Dendritic cell treated with granulocyte-macrophage colony-stimulating factor and Interleukin-4, amounts not matched to agents 40 ng/mL and 50 ng/mL, for 4 days (primary cell): ENCODE measurements at regions of chr5 and their contacts with region 1.

Region 1: GRCh38 chr5:42994246-42995151 is 45.6 kb downstream of the ANXA2R start:
- H3K4me3 Mint-ChIP-seq: peak overlapping the region; percentile 100
- H3K27ac Mint-ChIP-seq: peak overlapping the region; percentile 100
- H3K4me1 Mint-ChIP-seq: peaks cover 34% of the 10 kb centered on the region
- H3K27me3 Mint-ChIP-seq: peaks cover 10% of the 10 kb centered on the region

Region 2: GRCh38 chr5:42908509-42909488 is 85.7 kb before region 1 on chr5:
- intact Hi-C with region 1: loop called (anchors 5 kb)
- H3K4me3 Mint-ChIP-seq: peak overlapping the region; percentile 77
- H3K27ac Mint-ChIP-seq: peak overlapping the region; percentile 62
- H3K4me1 Mint-ChIP-seq: peaks cover 9% of the 10 kb centered on the region
- H3K27me3 Mint-ChIP-seq: peaks cover 3% of the 10 kb centered on the region

Region 3: GRCh38 chr5:42943931-42944631 is 50.4 kb before region 1 on chr5:
- intact Hi-C with region 1: no loop called
- H3K4me3 Mint-ChIP-seq: peak overlapping the region; percentile 11
- H3K27ac Mint-ChIP-seq: no peak overlapping the region
- H3K4me1 Mint-ChIP-seq: peaks cover 13% of the 10 kb centered on the region
- H3K27me3 Mint-ChIP-seq: peaks cover 26% of the 10 kb centered on the region

Region 4: GRCh38 chr5:42956551-42956950 is 37.9 kb before region 1 on chr5:
- intact Hi-C with region 1: no loop called
- H3K4me3 Mint-ChIP-seq: no peak overlapping the region
- H3K27ac Mint-ChIP-seq: no peak overlapping the region
- H3K4me1 Mint-ChIP-seq: peaks cover 14% of the 10 kb centered on the region
- H3K27me3 Mint-ChIP-seq: peaks cover 10% of the 10 kb centered on the region

Region 5: GRCh38 chr5:43008369-43009153 is 14.1 kb after region 1 on chr5:
- intact Hi-C with region 1: loop called (anchors 1 kb)
- H3K4me3 Mint-ChIP-seq: peak overlapping the region; percentile 82
- H3K27ac Mint-ChIP-seq: peak overlapping the region; percentile 98
- H3K4me1 Mint-ChIP-seq: peaks cover 39% of the 10 kb centered on the region
- H3K27me3 Mint-ChIP-seq: no peaks in the 10 kb centered on the region

Region 6: DNA sequence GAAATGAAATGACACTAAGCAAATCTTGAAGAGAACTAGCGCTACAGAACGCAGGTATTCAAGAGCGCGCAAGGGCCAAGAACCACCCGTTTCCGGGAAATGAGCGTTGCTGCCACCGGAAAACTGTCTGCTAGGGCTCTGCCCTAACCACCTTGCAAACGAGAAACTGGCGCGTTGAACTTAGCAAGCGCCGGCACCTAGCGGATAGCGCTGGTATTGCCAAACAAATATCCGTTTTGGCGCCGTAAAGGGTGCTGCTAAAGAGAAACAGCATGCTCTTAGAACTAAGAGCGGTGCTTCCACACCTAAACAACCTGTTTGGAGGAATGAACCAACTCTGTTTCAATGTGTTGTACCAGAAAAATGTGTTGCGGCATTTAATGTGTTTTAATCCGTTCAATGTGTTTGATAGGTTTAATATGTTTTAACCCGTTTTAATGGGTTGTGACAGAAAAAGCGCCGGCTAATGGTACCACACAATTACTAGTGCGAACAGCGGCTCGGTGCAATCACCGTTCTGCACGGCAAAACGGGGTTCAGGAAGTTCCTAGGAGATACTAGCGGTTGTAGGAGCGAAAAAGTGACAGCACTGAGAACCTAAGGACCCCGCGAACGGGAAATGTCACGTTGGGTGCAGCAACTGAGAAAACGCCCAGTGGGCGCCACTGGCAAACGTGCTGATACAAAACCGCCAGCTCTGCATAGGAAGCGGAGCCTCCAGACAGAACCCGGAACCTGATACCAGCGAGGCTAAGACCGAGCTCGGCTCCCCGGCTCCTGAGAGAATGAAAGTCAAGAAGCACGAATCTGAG is 46.0 kb after region 1 on chr5 and contains the start of gene ANXA2R:
- intact Hi-C with region 1: loop called (anchors 1 kb)
- H3K4me3 Mint-ChIP-seq: peak within 1 kb of the TSS; percentile 88
- H3K27ac Mint-ChIP-seq: peak within 1 kb of the TSS; percentile 100
- H3K4me1 Mint-ChIP-seq: peaks cover 43% of the 10 kb centered on the region
- H3K27me3 Mint-ChIP-seq: no peaks in the 10 kb centered on the region

Region 7: DNA sequence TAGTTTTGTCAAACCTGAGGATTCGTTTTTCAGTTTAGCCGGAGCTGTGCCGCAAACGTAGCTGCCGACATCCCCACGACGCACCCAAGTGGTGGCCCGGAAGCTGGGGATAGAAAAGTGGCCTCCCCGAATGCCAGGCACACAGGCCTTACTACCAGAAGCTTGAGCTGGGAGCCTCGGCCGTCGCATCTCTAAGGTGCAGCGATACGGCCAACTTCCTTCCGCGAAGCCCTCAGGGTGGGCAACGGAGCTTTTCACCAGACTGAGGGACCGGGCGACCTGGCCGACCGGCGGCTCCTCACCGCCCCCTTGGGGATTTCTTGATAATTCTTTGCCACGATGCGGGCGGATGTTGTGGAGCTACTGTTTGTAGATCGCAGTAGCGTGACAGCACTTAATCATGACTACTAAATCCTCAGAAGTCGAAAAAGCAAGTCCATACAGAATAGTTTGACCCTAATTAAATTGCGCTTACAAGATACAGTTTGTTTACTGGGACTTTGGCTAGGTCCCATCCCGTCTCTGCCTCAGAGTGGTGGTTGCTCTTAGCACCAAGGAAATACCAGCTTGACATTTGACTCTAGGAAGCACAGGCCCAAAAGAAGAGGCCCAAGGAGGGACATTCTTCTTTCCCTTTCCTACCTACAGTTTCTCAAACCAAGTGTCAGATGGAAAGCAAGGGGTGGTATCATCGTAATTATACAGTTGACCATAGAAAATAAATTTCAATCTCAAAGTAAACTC is 489.8 kb after region 1 on chr5:
- intact Hi-C with region 1: loop called (anchors 5 kb)
- H3K4me3 Mint-ChIP-seq: peak overlapping the region; percentile 96
- H3K27ac Mint-ChIP-seq: peak overlapping the region; percentile 99
- H3K4me1 Mint-ChIP-seq: peaks cover 23% of the 10 kb centered on the region
- H3K27me3 Mint-ChIP-seq: no peaks in the 10 kb centered on the region